GM10248 (cell line): ENCODE measurements at regions of chr5 and their contacts with region 1.

Region 1: GRCh38 chr5:170338933-170339779 is 41.6 kb upstream of the LCP2 start:
- DNase-seq: peak; percentile 82
- CTCF ChIP-seq: peak; percentile 99

Region 2: DNA sequence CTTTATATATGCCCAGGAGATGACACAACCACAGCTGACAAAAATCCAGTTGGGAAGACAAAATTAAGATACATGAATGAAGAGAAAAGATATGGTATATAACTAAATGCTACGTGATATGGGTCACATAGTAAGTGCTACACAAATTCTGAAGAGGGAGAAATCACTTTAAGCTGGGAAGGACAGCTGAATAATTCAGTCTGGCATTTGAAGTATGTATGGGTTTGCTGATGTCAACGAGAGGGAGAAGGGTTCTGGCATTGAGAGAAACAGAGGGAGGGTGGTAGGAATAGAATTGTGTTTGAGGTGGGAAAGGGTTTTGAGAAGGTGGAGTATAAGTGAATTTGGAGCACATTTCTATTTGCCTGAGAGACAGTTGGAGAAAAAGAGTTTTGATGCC is 1031.5 kb before region 1 on chr5:
- CTCF ChIA-PET with region 1: no interaction called
- POLR2A ChIA-PET with region 1: no interaction called
- DNase-seq: no peak
- CTCF ChIP-seq: no peak

Region 3: DNA sequence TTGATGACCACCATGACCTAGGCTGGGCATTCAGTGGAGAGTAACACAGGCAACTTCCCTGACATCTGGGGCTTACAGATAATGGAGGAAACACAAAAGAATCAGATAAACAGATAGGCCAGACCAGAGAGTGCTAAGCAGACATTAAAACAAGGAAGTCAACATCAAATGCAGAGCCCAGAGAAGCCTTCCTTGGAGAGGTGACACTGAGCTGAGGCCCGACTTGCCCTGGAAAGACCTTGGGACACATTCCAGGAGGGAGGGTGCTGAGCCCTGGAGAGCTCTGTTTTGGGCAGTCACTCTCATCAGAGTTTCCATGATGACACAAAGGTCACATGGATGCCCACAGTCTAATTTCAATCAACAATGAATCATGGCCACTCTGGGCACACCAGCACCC is 138.3 kb before region 1 on chr5:
- CTCF ChIA-PET with region 1: no interaction called
- POLR2A ChIA-PET with region 1: no interaction called
- DNase-seq: no peak
- CTCF ChIP-seq: no peak

Region 4: GRCh38 chr5:170225326-170226128 is 113.6 kb before region 1 on chr5:
- CTCF ChIA-PET with region 1: interaction called, 31 read pairs
- POLR2A ChIA-PET with region 1: no interaction called
- DNase-seq: peak; percentile 71
- CTCF ChIP-seq: peak; percentile 72

Region 5: GRCh38 chr5:170278611-170279452 is 60.3 kb before region 1 on chr5:
- CTCF ChIA-PET with region 1: interaction called, 15 read pairs
- POLR2A ChIA-PET with region 1: no interaction called
- DNase-seq: peak; percentile 82
- CTCF ChIP-seq: no peak

Region 6: DNA sequence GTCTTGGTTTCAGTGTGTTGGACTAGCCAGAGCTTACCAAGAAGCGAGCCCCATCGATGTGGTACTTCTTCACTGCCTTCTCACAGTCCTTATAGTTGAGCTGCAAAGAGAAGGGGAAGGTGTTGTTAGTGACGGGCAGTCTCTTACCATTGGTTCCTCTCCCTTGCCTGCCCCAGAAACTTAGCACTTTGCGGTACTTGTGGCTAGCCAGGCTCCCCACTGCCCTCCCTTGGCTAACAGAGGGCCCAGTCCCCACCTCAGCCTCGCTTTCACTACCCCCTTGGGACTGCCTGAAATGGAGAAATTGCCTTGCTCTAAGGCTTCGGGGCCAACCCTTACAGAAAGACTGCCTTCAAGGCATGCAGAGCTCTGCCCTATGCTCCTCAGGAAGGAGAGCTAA is 45.9 kb before region 1 on chr5:
- CTCF ChIA-PET with region 1: interaction called, 16 read pairs
- POLR2A ChIA-PET with region 1: no interaction called
- DNase-seq: peak; percentile 71
- CTCF ChIP-seq: peak; percentile 8

Region 7: GRCh38 chr5:170319301-170319700 is 19.9 kb before region 1 on chr5:
- CTCF ChIA-PET with region 1: interaction called, 18 read pairs
- POLR2A ChIA-PET with region 1: no interaction called
- DNase-seq: no peak
- CTCF ChIP-seq: no peak

Region 8: DNA sequence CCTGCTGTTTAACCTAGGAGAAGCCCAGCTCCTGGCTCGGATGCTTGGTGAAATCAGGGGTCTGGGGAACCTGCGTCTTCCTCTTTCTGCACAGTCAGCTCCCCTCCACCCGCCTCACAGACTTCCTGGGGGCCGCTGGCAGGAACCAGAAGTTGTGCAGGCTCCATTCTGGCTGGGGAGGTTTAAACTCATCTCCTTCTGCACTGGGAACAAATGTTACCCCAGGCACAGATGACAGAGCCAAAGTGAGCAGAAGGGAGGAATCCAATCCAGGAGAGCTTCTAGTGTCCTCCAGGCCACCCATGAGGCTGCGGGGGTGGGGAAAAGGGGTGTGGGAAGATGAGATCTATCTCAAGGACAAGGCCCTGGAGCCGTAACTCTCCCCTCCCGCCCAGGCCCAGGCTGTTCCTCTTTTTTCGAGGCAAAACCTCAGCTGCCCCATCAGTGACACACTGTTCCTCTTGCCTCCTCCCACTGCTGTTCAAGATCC is 18.8 kb after region 1 on chr5:
- CTCF ChIA-PET with region 1: interaction called, 17 read pairs
- POLR2A ChIA-PET with region 1: no interaction called
- DNase-seq: no peak
- CTCF ChIP-seq: no peak

Region 9: GRCh38 chr5:170397059-170397458 is 57.9 kb after region 1 on chr5:
- CTCF ChIA-PET with region 1: no interaction called
- POLR2A ChIA-PET with region 1: no interaction called
- DNase-seq: no peak
- CTCF ChIP-seq: no peak